Heart right ventricle (tissue), 16 donors: ENCODE measurements at regions of chr6 and their contacts with region 1.

Region 1: GRCh38 chr6:37850728-37851285 is 31.3 kb downstream of the ZFAND3 start:
- DNase-seq: no peak
- ATAC-seq: peak in 4 of 8 donors; percentile 19 to 42 (median 36)
- H3K4me3 ChIP-seq: no peak overlapping the region
- H3K27ac ChIP-seq: no peak overlapping the region
- H3K4me1 ChIP-seq: peaks cover 4 to 64% (median 48%) of the 10 kb centered on the region in 9 donors
- H3K27me3 ChIP-seq: no peaks in the 10 kb centered on the region
- CTCF ChIP-seq: no peak

Region 2: GRCh38 chr6:37807656-37808055 is 43.2 kb before region 1 on chr6:
- intact Hi-C with region 1: loop called in 1 of 10 experiments (anchors 10 kb)
- DNase-seq: no peak
- ATAC-seq: peak in 5 of 8 donors; percentile 35 to 67 (median 54)
- H3K4me3 ChIP-seq: no peak overlapping the region
- H3K27ac ChIP-seq: no peak overlapping the region
- H3K4me1 ChIP-seq: peaks cover 0 to 19% (median 5%) of the 10 kb centered on the region in 9 donors
- H3K27me3 ChIP-seq: peaks cover 0 to 6% (median 0%) of the 10 kb centered on the region in 7 donors
- CTCF ChIP-seq: no peak

Region 3: GRCh38 chr6:37965964-37966676 is 115.3 kb after region 1 on chr6:
- intact Hi-C with region 1: loop called in 1 of 10 experiments (anchors 10 kb)
- DNase-seq: no peak
- ATAC-seq: no peak
- H3K4me3 ChIP-seq: no peak overlapping the region
- H3K27ac ChIP-seq: no peak overlapping the region
- H3K4me1 ChIP-seq: peaks cover 0 to 14% (median under 1%) of the 10 kb centered on the region in 9 donors
- H3K27me3 ChIP-seq: no peaks in the 10 kb centered on the region
- CTCF ChIP-seq: no peak